Dendritic cell treated with granulocyte-macrophage colony-stimulating factor and Interleukin-4, amounts not matched to agents 40 ng/mL and 50 ng/mL, for 4 days (primary cell): ENCODE measurements at regions of chr17 and their contacts with region 1.

Region 1: DNA sequence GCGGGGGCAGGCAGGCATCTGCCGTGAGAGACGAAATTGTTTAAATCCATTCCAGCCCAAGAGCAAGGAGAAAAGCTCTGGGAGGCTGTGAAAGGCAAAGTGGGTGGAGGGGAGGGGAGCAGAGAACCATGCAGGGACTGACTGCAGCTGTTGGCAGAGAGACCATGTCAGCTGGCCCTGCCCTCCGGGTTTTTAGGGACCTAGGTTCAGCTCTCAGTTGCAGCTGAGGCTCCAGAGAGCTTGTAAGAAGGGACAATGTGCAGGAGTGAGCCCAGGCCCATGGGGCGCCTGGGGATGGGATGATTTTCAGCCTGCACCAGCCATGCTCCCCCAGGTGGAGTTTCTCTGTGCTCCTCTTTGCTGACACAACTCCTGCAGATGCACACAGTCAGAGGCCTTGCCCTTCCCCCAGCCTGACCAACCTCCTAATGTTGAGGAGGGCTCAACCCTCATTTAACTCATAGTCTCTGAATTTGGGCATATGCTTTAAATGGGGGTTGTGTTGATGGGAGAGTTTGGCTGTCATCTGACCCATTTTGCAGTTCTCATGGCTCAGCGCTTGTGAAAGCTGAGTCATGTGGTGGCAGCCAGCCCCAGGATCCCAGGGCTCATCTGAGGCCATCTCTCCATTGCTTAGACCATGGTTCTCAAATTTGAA is 70.9 kb downstream of the PLXDC1 start:
- H3K4me3 Mint-ChIP-seq: no peak overlapping the region
- H3K27ac Mint-ChIP-seq: no peak overlapping the region
- H3K4me1 Mint-ChIP-seq: no peaks in the 10 kb centered on the region
- H3K27me3 Mint-ChIP-seq: peaks cover 24% of the 10 kb centered on the region

Region 2: DNA sequence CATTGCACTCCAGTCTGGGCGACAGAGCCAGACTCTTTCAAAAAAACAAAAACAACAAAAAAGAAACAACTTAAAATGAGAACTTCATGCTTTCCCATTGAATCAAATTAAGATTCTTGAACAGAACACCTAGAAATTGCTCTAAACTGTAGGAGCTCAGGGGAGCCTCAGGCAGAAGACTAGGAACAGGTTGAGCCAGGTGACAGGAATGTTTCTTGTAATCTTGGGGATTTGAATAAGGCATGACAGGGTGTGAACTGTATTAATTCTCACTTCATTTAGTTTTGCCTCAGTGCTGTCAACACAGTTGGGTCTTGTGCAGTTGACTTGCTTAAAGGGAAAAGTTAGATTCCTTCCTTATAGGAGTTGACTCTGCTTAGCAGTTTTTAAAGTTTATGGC is 701.1 kb before region 1 on chr17:
- intact Hi-C with region 1: no loop called
- H3K4me3 Mint-ChIP-seq: no peak overlapping the region
- H3K27ac Mint-ChIP-seq: no peak overlapping the region
- H3K4me1 Mint-ChIP-seq: peaks cover 5% of the 10 kb centered on the region
- H3K27me3 Mint-ChIP-seq: no peaks in the 10 kb centered on the region

Region 3: GRCh38 chr17:38841141-38841485 is 239.4 kb before region 1 on chr17:
- intact Hi-C with region 1: no loop called
- H3K4me3 Mint-ChIP-seq: peak overlapping the region; percentile 46
- H3K27ac Mint-ChIP-seq: no peak overlapping the region
- H3K4me1 Mint-ChIP-seq: no peaks in the 10 kb centered on the region
- H3K27me3 Mint-ChIP-seq: peaks cover 3% of the 10 kb centered on the region

Region 4: DNA sequence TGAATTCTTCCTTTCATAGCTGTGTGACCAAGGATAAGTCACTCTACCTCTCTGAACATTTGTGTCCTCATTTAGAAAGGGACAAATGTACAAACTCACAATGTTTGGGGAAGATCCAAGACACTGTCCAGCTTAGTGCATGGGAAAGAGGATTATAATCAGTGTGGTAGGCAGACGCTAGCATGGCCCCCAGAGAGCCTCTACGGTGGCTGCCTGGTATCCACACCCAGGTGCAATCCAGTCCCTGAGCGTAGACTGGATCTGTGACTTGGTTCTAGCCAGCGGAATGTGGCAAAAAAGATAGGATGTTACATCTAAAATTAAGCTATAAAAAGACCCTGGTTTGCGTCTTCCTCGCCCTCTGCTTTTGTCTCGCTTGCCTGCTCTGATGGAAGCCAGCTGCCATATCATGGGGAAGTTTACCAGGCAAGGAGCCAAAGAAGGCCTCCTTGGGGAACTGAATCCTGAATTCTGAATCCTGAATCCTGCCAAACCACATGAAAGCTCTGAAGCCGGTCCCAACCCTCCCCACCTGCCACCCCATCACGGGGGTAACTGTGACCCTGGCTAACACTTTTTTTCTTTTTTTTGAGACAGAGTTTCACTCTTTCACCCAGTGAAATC is 19.2 kb after region 1 on chr17:
- intact Hi-C with region 1: no loop called
- H3K4me3 Mint-ChIP-seq: no peak overlapping the region
- H3K27ac Mint-ChIP-seq: peak overlapping the region; percentile 38
- H3K4me1 Mint-ChIP-seq: peaks cover 49% of the 10 kb centered on the region
- H3K27me3 Mint-ChIP-seq: peaks cover 41% of the 10 kb centered on the region

Region 5: GRCh38 chr17:39123627-39124026 is 43.1 kb after region 1 on chr17:
- intact Hi-C with region 1: loop called (anchors 5 kb)
- H3K4me3 Mint-ChIP-seq: no peak overlapping the region
- H3K27ac Mint-ChIP-seq: no peak overlapping the region
- H3K4me1 Mint-ChIP-seq: peaks cover 21% of the 10 kb centered on the region
- H3K27me3 Mint-ChIP-seq: peaks cover 10% of the 10 kb centered on the region

Region 6: DNA sequence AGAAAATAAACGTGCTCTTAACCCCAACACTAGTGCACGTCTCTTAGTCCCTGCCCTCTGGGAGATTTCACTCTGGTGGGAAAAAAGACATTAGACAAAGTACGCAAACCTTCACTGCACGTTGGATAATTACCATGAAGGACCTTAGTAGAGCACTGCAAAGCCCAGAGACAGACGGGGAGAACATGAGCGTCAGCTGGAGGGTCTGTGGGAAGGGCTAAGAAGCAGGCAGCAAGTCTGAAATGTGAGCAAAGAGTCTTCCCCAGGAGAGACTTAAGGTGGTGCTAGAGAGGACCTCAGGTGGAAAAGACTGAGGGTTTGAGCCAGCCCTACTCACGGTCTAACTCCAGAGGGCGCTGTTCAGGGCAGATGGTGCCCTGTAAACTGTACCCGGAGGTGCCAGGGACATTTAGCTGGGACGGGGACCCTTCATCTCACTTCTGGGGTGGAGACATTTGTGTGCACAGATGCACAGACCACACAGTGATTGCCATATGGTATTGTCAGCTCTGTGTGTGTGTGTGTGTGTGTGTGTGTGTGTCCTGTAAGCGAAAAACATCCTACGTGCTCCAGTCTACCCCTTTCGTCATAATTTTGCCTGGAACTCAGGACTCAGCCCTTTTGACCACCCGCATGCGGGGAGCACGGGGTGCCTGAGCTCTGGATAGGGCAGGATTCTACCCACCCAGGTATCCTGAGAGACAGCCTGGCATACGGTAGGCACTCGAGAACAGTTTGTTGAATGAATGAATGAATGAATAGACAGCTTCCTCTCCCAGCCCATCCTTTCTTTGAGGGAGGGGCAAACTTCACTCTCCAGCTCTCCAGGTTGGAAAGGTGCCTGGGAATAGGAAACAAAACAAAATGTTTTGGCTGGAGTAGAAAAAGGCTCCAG is 155.3 kb after region 1 on chr17:
- intact Hi-C with region 1: loop called (anchors 10 kb)
- H3K4me3 Mint-ChIP-seq: no peak overlapping the region
- H3K27ac Mint-ChIP-seq: no peak overlapping the region
- H3K4me1 Mint-ChIP-seq: peaks cover 23% of the 10 kb centered on the region
- H3K27me3 Mint-ChIP-seq: peaks cover 41% of the 10 kb centered on the region